WTC11 (cell line): ENCODE measurements at regions of chr9 and their contacts with region 1.

Region 1: DNA sequence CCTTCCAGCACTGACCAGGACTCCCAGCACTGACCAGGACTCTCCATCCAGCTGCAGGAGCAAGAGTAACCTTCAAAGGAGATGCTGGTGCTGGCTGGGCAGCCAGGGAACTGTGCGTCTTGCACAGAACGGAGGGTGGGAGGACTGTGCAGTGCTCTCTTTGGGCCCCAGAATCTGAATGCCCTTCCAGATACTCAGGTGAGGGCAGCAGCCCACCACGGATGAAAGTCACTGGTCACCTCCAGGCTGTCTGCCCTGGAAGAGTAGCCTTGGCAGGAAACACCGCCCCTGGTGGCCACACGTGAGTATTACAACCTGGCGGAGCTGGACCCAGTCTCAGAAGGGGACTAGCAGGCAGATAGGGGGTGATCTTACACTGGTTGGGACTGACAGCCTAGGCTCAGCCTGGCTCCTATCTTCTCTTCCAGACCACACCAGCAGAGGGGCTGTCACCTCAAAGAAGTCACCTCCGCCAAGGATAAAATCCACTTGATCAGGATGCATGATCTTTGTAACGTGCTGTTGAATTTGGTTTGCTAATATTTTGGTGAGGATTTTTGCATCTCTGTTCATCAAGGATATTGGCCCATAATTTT is 4.8 kb upstream of the SARDH start:
- DNase-seq: peak; percentile 96
- ATAC-seq: peak; percentile 93
- H3K4me3 Mint-ChIP-seq: no peak overlapping the region
- H3K27ac Mint-ChIP-seq: no peak overlapping the region
- H3K4me1 Mint-ChIP-seq: peaks cover under 1% of the 10 kb centered on the region; the same call in 1 of the 2 replicates
- H3K27me3 Mint-ChIP-seq: peaks cover 7% of the 10 kb centered on the region
- CTCF ChIP-seq: peak; percentile 100

Region 2: DNA sequence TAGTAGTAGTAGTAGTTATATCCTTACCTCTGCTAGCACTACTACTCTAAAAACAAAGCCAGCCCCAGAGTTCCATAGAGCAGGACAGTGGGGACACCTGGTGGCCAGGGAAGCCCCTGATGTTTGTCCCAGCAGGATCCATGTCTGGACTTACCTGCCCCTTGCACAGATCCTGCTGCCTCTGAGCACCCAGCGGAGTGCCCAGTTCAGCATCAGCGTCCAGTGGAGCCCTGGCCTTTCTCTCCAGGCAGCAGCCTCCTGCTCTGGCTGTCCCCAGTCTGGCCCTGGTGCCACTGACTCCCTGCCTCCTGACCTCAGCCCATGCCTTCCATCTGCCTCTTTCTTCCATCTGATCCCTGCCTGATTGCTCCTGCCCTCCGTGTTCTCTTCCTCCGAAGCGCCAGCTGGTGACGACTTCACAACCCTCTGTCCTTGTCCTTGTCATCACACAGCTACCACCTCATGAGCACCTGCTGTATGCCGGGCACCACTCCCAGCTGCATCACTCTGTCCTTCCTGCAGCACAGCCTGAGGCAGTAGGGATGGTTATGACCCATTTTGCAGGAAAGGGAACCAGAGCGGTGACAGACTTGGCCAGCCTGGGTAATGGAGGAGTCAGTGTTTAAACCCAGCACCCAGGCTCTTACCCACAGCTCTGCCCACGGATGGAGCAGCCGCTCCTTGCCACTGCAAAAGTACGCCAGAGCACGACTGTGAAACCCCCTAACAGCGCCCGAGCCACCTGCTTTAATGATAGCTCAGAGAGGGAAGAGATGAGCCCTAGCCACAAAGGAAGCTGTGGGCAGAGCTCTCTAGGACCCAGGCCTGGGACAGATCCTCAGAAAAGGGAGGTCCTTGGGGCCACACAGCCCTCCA is 16.3 kb before region 1 on chr9:
- CTCF ChIA-PET with region 1: interaction called, 39 read pairs
- POLR2A ChIA-PET with region 1: no interaction called
- DNase-seq: peak; percentile 71
- ATAC-seq: peak; percentile 79
- H3K4me3 Mint-ChIP-seq: no peak overlapping the region
- H3K27ac Mint-ChIP-seq: peak overlapping the region; percentile 20; the same call in 1 of the 2 replicates
- H3K4me1 Mint-ChIP-seq: no peaks in the 10 kb centered on the region
- H3K27me3 Mint-ChIP-seq: no peaks in the 10 kb centered on the region; the same call in 1 of the 2 replicates
- CTCF ChIP-seq: peak; percentile 29

Region 3: DNA sequence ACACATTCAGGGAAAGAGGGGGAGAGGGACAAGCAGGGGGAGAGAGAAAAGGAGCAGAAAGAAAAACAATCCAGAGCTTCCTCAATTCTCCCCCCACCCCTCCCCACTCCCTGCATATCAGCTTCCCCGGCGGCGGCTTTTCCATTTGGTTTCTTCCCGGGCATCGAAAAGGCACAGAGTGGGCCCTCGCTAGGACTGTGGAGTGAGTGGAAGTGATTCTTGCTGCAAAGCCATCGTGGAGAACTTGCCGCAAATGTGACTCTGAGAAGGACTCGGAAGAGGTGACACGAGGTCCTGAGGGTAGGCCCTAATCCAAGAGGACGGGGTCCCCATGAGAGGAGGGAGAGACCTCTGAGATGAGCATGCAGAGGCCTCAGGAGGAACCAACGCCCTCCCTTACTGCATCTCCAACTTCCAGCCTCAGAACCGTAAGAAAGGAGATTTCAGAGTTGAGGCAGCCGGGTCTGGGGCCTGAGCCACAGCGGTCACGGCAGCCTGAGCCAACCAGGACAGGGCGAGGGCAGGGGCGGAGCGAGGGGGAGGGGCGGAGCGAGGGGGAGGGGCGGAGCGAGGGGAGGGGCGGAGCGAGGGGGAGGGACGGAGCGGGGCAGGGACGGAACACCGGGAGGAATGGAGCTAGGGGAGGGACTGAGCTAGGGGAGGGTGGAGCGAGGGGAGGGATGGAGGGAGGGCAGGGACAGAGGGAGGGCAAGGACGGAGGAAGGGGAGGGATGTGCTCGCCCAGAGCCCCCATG is 16.4 kb after region 1 on chr9:
- CTCF ChIA-PET with region 1: interaction called, 21 read pairs
- POLR2A ChIA-PET with region 1: no interaction called
- DNase-seq: peak; percentile 48
- ATAC-seq: peak; percentile 82
- H3K4me3 Mint-ChIP-seq: no peak overlapping the region
- H3K27ac Mint-ChIP-seq: peak overlapping the region; percentile 85; the same call in 1 of the 2 replicates
- H3K4me1 Mint-ChIP-seq: peaks cover 3% of the 10 kb centered on the region; the same call in 1 of the 2 replicates
- H3K27me3 Mint-ChIP-seq: peaks cover 2% of the 10 kb centered on the region; the same call in 1 of the 2 replicates
- CTCF ChIP-seq: no peak

Region 4: DNA sequence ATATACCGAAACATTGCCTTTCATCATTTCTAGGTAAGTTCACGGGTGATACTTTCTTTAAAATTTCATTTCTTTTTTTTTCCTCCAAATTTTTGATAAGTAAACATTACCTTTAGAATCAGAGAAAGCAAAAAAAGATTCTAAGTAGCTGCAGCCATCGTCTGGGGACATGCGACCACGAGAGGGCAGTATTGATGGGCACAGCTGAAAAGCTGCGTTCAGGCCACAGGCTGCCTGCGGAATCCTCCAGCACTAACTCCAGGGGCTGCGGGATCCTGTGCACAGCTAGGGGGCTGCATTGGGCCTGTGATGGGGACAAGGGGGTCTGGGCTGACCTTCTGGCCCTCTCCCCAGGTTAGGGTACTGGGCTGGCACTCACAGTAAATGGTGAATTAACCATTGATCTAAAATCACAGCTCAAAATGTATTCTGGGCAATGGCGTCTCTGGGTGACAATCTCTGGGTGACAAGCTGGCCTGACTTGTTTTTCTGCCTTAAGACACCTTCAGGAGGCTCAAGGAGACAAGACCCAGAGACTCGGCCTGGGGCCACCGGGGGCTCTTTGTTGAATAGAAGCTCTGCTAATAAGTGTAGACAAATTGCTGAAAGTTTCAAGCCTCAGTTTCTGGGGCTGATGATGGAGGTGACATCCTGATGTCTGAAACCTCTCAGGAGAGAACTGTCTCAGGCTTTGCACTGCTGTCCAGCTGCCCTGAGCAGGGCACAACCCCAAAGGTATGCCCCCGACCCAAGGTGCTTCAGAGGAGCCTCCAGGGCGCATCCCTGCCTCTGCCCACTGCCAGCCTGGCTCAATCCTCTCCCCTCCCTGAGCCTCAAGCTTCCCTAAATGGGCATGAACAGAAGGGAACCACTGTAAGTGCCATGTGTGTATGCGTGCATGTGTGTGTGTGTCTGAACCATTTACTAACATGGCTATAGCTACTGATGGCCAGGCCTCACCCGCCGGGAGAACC is 39.5 kb after region 1 on chr9:
- CTCF ChIA-PET with region 1: interaction called, 27 read pairs
- POLR2A ChIA-PET with region 1: no interaction called
- DNase-seq: peak; percentile 83
- ATAC-seq: peak; percentile 88
- H3K4me3 Mint-ChIP-seq: no peak overlapping the region
- H3K27ac Mint-ChIP-seq: no peak overlapping the region
- H3K4me1 Mint-ChIP-seq: no peaks in the 10 kb centered on the region
- H3K27me3 Mint-ChIP-seq: no peaks in the 10 kb centered on the region
- CTCF ChIP-seq: no peak; the same call in 1 of the 2 replicates

Region 5: DNA sequence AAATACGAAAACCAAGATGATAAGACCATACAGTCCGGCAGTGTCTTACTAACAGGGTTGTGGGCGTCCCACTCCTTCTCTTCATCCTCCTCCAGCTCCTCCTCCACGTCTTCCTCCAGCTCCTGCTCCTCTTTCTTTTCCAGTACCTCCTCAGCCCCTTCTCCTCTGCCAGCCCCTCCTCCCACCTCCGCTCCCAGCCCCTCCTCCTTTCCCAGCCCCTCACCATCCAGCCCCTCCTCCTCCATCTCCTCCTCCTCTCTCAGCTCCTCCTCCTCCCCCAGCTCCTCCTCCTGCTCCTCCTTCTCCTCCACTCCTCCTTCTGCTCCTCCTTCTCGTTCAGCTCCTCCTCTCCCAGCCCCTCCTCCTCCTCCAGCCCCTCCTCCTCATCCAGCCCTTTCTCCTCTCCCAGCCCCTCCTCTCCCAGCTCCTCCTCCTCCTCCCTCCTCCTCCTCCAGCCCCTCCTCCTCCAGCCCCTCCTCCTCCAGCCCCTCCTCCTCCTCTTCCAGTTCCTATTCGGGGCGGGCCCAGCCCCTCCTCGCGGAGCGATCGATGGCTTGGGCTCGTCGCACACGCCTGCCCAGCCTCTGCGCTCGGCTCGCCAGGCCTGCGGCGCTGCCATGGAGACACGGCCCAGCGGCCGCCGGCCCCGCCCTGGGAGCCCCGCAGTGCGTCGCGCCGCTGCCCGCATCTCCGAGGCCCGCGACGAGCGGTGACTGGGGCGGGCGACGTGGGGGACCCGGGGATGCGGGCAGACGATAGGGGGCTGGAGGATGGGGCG is 282.1 kb after region 1 on chr9 and contains the start of gene BRD3OS:
- CTCF ChIA-PET with region 1: interaction called, 24 read pairs
- POLR2A ChIA-PET with region 1: no interaction called
- DNase-seq: peak; percentile 95
- ATAC-seq: peak; percentile 96
- H3K4me3 Mint-ChIP-seq: peak within 1 kb of the TSS; percentile 68
- H3K27ac Mint-ChIP-seq: no peak within 1 kb of the TSS
- H3K4me1 Mint-ChIP-seq: peaks cover 10% of the 10 kb centered on the region; the same call in 1 of the 2 replicates
- H3K27me3 Mint-ChIP-seq: no peaks in the 10 kb centered on the region
- CTCF ChIP-seq: no peak
- total RNA-seq, gene BRD3OS: 16.2 to 16.9 TPM (median 16.6 TPM) in 3 replicates